Activated T-helper 2 cell treated with anti-CD3 and anti-CD28 coated beads, Interferon-gamma antibody, Interleukin-2, Interleukin-4, amounts not matched to agents 10 μg/mL and 5 μg/mL and 100 μg/mL, durations not matched to agents 14 hours and 24 hours and 36 hours (primary cell): ENCODE measurements at regions of chr2 and their contacts with region 1.

Region 1: GRCh38 chr2:28413142-28413898 is 20.7 kb downstream of the FOSL2 start:
- DNase-seq: no peak
- H3K4me3 Mint-ChIP-seq: no peak overlapping the region
- H3K27ac Mint-ChIP-seq: no peak overlapping the region
- H3K4me1 Mint-ChIP-seq: peaks cover 37% of the 10 kb centered on the region
- H3K27me3 Mint-ChIP-seq: no peaks in the 10 kb centered on the region

Region 2: GRCh38 chr2:28296243-28296642 is 117.1 kb before region 1 on chr2:
- intact Hi-C with region 1: no loop called
- DNase-seq: no peak
- H3K4me3 Mint-ChIP-seq: no peak overlapping the region
- H3K27ac Mint-ChIP-seq: no peak overlapping the region
- H3K4me1 Mint-ChIP-seq: peaks cover 22% of the 10 kb centered on the region
- H3K27me3 Mint-ChIP-seq: no peaks in the 10 kb centered on the region

Region 3: DNA sequence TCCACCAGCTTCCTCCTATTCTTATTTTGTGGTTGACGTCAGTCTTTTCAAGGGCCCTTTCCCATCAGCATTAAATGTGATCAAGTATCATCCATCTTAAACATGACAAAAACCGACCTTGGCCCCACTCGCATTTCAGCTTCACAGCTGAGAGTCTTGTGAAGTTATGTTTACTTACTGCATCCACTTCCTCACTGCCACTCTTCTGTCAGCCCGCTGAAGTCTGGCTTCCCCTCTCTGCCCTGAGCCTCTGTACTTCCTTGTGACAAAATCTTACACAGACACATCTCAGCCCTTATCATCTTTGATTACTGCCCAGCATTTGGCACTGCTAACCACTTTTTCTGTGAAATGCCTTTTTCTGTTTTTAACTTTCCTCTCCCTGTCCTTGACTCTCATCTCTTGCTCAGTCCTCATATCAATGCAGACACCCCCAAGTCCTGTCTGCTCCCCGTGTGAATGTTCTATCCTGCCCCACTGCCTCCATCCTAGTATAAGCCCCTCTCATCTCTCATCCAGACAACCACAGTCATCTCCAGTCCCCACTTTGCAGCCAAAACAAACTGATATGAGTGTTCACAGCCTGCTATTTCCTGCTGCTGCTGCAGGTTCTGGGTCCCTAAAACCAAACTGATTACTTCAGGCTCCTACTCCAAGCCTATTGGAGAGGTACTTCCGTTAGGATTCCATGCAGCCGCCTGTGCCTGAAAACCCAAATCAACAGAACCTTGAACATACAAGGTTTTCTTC is 10.7 kb after region 1 on chr2:
- intact Hi-C with region 1: loop called (anchors 1 kb)
- DNase-seq: peak; percentile 33
- H3K4me3 Mint-ChIP-seq: peak overlapping the region; percentile 54
- H3K27ac Mint-ChIP-seq: peak overlapping the region; percentile 74
- H3K4me1 Mint-ChIP-seq: peaks cover 52% of the 10 kb centered on the region
- H3K27me3 Mint-ChIP-seq: no peaks in the 10 kb centered on the region

Region 4: DNA sequence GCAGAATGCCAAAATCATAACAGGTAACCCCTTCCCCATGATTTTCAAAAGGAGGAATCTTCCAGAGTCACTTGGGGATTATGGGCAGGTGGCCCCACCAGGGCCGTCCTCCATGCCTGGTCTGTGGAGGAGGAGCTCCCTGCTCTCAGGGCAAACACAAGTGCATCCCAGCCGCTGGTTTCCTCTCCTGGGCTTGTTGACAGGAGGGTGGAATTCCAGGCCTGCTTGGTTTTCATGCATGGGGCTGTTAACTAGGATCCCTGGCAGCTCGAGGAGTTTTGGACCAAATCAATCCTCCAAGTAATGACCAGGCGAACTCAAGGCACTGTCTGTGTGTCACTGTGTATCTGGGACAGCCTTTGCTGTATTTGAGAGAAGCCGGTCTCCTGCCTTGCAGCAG is 24.6 kb after region 1 on chr2:
- intact Hi-C with region 1: no loop called
- DNase-seq: no peak
- H3K4me3 Mint-ChIP-seq: no peak overlapping the region
- H3K27ac Mint-ChIP-seq: no peak overlapping the region
- H3K4me1 Mint-ChIP-seq: peaks cover 48% of the 10 kb centered on the region
- H3K27me3 Mint-ChIP-seq: no peaks in the 10 kb centered on the region

Region 5: DNA sequence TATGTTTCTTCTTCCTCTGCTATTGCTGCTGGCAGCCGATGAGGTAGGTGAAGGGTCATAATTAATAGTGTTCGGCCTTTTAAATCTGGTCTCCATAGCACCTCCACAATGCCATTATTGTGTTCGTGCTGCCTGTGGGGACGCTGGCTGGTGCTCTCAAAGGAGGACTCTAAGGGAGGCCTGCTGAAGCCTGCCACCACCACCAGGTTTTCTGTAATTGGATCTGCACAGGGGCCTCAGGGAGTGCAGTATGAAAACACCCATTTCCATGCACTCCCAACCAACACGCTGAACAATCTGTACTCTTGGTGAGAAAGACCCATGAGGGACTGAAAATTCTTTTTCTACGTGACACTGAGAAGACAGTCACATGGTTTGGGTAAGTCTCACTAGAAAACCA is 684.2 kb after region 1 on chr2:
- intact Hi-C with region 1: no loop called
- DNase-seq: no peak
- H3K4me3 Mint-ChIP-seq: no peak overlapping the region
- H3K27ac Mint-ChIP-seq: no peak overlapping the region
- H3K4me1 Mint-ChIP-seq: peaks cover 2% of the 10 kb centered on the region
- H3K27me3 Mint-ChIP-seq: peaks cover 12% of the 10 kb centered on the region